ENCODE measurements at regions of chr22 and their contacts with region 1.

Region 1: DNA sequence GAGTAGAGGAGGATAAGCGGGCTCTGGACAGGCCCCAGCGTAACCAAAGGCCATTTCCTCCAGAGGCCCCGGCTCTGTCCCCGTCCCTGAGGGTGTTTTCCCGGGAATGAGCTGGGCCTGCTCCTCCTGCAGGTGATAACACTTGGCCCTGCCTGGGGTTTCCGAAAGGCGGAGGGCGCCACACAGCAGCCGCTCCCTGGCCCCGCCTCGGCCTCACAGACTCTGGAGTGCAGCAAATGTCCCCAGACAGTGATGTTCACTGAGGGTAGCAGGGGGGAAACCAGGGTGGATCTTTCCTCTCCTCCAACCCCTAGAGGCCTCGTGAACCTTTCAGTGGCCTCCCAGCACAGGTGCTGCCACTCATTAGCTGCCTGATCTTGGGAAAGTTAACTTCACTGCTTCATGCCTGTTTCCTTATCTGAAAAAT is 10.5 kb upstream of the MGAT3 start:
- DNase-seq: peak; percentile 51
- ATAC-seq: peak; percentile 61
- H3K4me3 Mint-ChIP-seq: peak overlapping the region; percentile 86
- H3K27ac Mint-ChIP-seq: peak overlapping the region; percentile 90
- H3K4me1 Mint-ChIP-seq: peaks cover 90% of the 10 kb centered on the region
- H3K27me3 Mint-ChIP-seq: no peaks in the 10 kb centered on the region
- CTCF ChIP-seq: no peak

Region 2: GRCh38 chr22:37965940-37966664 is 1480.2 kb before region 1 on chr22:
- CTCF ChIA-PET with region 1: no interaction called
- POLR2A ChIA-PET with region 1: interaction called, 16 read pairs
- intact Hi-C with region 1: no loop called
- DNase-seq: no peak
- ATAC-seq: no peak
- H3K4me3 Mint-ChIP-seq: no peak overlapping the region
- H3K27ac Mint-ChIP-seq: no peak overlapping the region
- H3K4me1 Mint-ChIP-seq: no peaks in the 10 kb centered on the region
- H3K27me3 Mint-ChIP-seq: no peaks in the 10 kb centered on the region
- CTCF ChIP-seq: no peak

Region 3: DNA sequence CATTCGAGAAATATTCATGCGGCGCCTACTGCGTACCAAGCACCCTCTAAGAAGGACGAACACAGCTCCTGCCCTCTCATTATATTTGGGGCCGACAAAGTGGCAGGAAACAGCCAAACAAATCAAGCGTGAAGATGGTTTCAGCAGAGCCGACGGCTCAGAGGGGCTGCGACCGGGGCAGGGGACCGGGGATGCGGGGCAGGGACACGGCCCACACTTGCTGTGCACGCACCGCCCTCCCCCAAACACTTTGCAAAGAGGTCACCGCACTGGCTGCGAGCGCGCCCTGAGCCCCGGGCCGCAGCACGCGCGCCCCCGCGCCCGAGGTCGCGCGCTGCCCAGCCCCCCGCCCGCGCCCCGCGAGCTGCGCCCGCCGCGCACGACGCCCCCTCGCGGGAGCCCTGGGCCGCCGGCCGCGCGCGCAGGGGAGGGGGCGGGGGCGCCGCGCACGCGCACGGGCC is 96.8 kb before region 1 on chr22:
- CTCF ChIA-PET with region 1: no interaction called
- POLR2A ChIA-PET with region 1: interaction called, 17 read pairs
- intact Hi-C with region 1: loop called (anchors 2 kb)
- DNase-seq: peak; percentile 47
- ATAC-seq: peak; percentile 9
- H3K4me3 Mint-ChIP-seq: peak overlapping the region; percentile 87
- H3K27ac Mint-ChIP-seq: peak overlapping the region; percentile 87
- H3K4me1 Mint-ChIP-seq: peaks cover 40% of the 10 kb centered on the region
- H3K27me3 Mint-ChIP-seq: peaks cover 2% of the 10 kb centered on the region
- CTCF ChIP-seq: no peak

Region 4: DNA sequence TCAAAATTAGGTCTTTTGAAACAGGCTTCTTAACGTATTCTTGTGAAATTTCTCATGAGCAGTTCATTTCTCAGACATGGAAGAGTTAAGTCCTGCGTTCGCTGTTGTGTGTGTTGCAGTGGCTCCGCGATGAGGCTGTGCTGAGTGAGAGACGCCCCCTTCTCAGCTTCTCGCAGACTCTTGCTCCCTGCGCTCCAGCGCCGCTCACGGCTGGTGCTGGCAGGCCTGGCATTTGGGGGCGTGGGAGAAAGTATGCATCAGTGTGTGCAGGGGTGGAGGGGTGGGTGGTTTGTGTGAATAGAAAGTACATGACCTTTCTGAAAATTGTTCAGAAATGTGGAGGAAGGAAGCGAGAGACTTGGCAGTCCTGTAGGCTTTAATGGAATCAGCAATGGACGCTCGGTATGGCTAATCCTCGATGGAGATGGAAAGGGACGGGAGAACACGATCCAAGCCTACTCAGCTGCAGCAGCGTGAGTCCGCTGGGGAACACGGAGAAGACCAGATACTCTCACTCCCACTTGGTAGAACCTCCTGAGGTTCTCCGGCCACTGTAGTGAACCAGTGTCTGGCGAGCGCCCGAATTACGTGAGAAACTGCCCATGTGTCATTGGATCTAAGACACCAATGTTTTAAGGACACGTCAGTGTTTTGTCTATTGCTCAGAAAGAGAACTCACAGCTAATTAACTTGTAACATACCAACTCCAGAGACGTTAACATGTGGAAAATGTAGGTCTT is 40.8 kb before region 1 on chr22:
- CTCF ChIA-PET with region 1: no interaction called
- POLR2A ChIA-PET with region 1: interaction called, 20 read pairs
- intact Hi-C with region 1: no loop called
- DNase-seq: no peak
- ATAC-seq: no peak
- H3K4me3 Mint-ChIP-seq: no peak overlapping the region
- H3K27ac Mint-ChIP-seq: no peak overlapping the region
- H3K4me1 Mint-ChIP-seq: peaks cover 20% of the 10 kb centered on the region
- H3K27me3 Mint-ChIP-seq: no peaks in the 10 kb centered on the region
- CTCF ChIP-seq: no peak

Region 5: GRCh38 chr22:39462443-39463221 is 16.3 kb after region 1 on chr22:
- CTCF ChIA-PET with region 1: interaction called, 5 read pairs
- POLR2A ChIA-PET with region 1: interaction called, 44 read pairs
- intact Hi-C with region 1: loop called (anchors 1 kb)
- DNase-seq: no peak
- ATAC-seq: peak; percentile 11
- H3K4me3 Mint-ChIP-seq: peak overlapping the region; percentile 32
- H3K27ac Mint-ChIP-seq: peak overlapping the region; percentile 70
- H3K4me1 Mint-ChIP-seq: peaks cover 86% of the 10 kb centered on the region
- H3K27me3 Mint-ChIP-seq: peaks cover 3% of the 10 kb centered on the region
- CTCF ChIP-seq: no peak

Region 6: GRCh38 chr22:39490135-39490798 is 44.0 kb after region 1 on chr22:
- CTCF ChIA-PET with region 1: interaction called, 7 read pairs
- POLR2A ChIA-PET with region 1: interaction called, 11 read pairs
- intact Hi-C with region 1: loop called (anchors 2 kb)
- DNase-seq: peak; percentile 55
- ATAC-seq: peak; percentile 99
- H3K4me3 Mint-ChIP-seq: peak overlapping the region; percentile 17
- H3K27ac Mint-ChIP-seq: peak overlapping the region; percentile 13
- H3K4me1 Mint-ChIP-seq: peaks cover 23% of the 10 kb centered on the region
- H3K27me3 Mint-ChIP-seq: no peaks in the 10 kb centered on the region
- CTCF ChIP-seq: no peak

Region 7: DNA sequence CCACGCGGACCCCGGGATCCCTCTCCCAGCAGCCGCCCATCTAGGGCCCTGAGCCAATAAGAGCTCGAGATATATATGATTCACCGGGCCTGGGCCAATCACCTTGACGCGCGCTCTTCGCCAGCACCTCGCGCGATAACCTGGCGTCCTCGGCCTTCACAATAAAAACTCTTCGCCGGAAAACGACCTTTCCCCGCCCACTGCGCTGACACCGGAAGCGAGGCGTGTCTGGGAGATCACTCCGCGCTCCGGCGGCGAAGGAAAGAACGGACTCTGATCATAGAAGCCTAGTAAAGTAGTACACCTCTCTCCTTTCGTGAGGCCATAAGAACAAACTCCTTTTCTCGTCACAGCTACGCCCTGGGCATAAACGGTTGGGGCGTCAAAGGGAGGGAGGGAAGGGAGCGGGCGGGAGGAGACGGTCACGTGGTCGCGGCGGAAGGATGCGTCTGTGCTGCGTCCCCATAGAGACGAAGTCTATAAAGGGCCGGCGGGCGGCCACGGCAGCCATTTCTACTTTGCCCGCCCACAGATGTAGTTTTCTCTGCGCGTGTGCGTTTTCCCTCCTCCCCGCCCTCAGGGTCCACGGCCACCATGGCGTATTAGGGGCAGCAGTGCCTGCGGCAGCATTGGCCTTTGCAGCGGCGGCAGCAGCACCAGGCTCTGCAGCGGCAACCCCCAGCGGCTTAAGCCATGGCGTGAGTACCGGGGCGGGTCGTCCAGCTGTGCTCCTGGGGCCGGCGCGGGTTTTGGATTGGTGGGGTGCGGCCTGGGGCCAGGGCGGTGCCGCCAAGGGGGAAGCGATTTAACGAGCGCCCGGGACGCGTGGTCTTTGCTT is 74.0 kb after region 1 on chr22 and contains the start of gene ATF4:
- CTCF ChIA-PET with region 1: no interaction called
- POLR2A ChIA-PET with region 1: interaction called, 33 read pairs
- intact Hi-C with region 1: loop called (anchors 2 kb)
- DNase-seq: peak; percentile 88
- ATAC-seq: peak; percentile 91
- H3K4me3 Mint-ChIP-seq: peak within 1 kb of the TSS; percentile 91
- H3K27ac Mint-ChIP-seq: peak within 1 kb of the TSS; percentile 98
- H3K4me1 Mint-ChIP-seq: peaks cover 58% of the 10 kb centered on the region
- H3K27me3 Mint-ChIP-seq: peaks cover 2% of the 10 kb centered on the region
- CTCF ChIP-seq: no peak
- total RNA-seq, gene ATF4: 363 and 368 TPM in 2 replicates

Measured in activated B cell treated with CpG ODN at 0.5 μM for 24 hours (primary cell).